HCT116 (cell line): ENCODE measurements at regions of chr3 and their contacts with region 1.

Region 1: DNA sequence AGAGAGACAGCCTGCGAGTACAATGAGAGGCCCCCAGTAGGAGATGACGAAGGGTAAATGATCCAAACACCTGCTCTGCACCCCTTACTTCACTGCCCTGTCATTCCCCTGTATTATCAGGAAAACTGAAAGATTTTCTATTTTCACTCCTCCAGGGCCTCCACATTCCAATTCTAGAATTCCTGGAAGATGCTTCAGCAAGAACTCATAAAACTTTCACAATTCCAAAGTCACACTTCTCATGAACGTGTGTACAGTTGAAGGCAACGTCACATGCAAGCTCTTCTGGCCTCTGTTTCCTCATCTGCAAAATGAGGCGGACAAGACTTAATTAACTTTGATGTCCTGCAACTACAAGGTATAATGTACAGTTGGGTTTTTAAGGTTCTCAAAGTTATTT is 62.8 kb upstream of the SPATA12 start:
- DNase-seq: no peak
- ATAC-seq: no peak
- H3K4me3 ChIP-seq: no peak overlapping the region
- H3K27ac ChIP-seq: no peak overlapping the region
- H3K4me1 ChIP-seq: peaks cover 0 to 8% of the 10 kb centered on the region in 2 experiments; a peak in 2 of 4 replicates
- H3K27me3 ChIP-seq: no peaks in the 10 kb centered on the region
- CTCF ChIP-seq: no peak
- POLR2A ChIP-seq: no peak
- RAD21 ChIP-seq: no peak

Region 2: GRCh38 chr3:57221883-57222282 is 224.2 kb after region 1 on chr3:
- CTCF ChIA-PET with region 1: no interaction called
- POLR2A ChIA-PET with region 1: no interaction called
- RAD21 ChIA-PET with region 1: no interaction called
- intact Hi-C with region 1: loop called (anchors 2 kb)
- DNase-seq: no peak
- ATAC-seq: peak; percentile 49; the same call in 1 of the 2 replicates
- H3K4me3 ChIP-seq: no peak overlapping the region
- H3K27ac ChIP-seq: no peak overlapping the region
- H3K4me1 ChIP-seq: peaks cover 0 to 4% of the 10 kb centered on the region in 2 experiments; a peak in 2 of 4 replicates
- H3K27me3 ChIP-seq: no peaks in the 10 kb centered on the region
- CTCF ChIP-seq: peak in 2 of 3 experiments; percentile 27 to 43; a peak in 2 of 6 replicates
- POLR2A ChIP-seq: no peak
- RAD21 ChIP-seq: peak; percentile 69

Region 3: GRCh38 chr3:57234613-57235575 is 237.2 kb after region 1 on chr3:
- CTCF ChIA-PET with region 1: no interaction called
- POLR2A ChIA-PET with region 1: no interaction called
- RAD21 ChIA-PET with region 1: no interaction called
- intact Hi-C with region 1: no loop called
- DNase-seq: no peak
- ATAC-seq: no peak
- H3K4me3 ChIP-seq: no peak overlapping the region
- H3K27ac ChIP-seq: no peak overlapping the region
- H3K4me1 ChIP-seq: peaks cover 2 to 7% of the 10 kb centered on the region in 2 experiments
- H3K27me3 ChIP-seq: no peaks in the 10 kb centered on the region
- CTCF ChIP-seq: no peak
- POLR2A ChIP-seq: no peak
- RAD21 ChIP-seq: no peak